Adrenal gland (tissue), 19 donors: ENCODE measurements at regions of chr5 and their contacts with region 1.

Region 1: GRCh38 chr5:173625696-173626504 is 9.4 kb upstream of the BOD1 start:
- DNase-seq: no peak
- H3K4me3 ChIP-seq: no peak overlapping the region
- H3K27ac ChIP-seq: no peak overlapping the region
- H3K4me1 ChIP-seq: peaks cover 0 to 4% of the 10 kb centered on the region in 2 donors
- H3K27me3 ChIP-seq: no peaks in the 10 kb centered on the region
- CTCF ChIP-seq: no peak
- POLR2A ChIP-seq: no peak

Region 2: DNA sequence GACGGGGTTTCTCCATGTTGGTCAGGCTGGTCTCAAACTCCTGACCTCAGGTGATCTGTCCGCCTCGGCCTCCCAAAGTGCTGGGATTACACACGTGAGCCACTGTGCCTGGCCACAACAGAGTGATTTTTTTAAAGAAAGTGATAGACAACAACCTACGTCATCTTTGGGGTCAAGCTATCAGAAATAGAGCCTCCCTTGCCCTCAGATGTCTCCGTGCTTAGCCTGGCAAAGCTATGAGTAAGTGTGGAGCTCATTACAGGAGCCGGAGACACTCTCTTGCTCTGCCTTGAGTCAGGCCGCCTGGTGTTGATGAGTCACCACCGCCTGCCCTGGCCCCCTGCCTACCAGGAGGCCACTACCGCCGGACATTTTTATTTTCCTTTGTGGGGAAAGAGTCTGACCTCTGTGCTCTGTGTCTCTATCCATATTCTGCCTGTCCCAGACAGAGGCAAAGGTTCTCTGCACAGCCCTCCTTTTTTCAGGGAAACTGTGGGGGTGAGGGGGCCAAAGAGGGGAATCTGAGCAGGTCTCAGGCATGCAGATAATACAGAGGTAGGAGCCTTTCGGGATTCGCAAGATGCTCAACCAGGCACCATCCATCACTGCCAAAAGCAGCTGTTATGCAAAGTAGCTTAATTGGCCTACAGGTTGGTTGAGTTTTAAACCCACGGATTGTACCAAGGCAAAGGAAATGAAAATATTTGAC is 138.6 kb after region 1 on chr5:
- intact Hi-C with region 1: loop called in 1 of 2 experiments (anchors 10 kb)
- DNase-seq: peak; percentile 93 to 98 (median 97)
- H3K4me3 ChIP-seq: no peak overlapping the region
- H3K27ac ChIP-seq: peak overlapping the region; percentile 61 to 96 (median 80)
- H3K4me1 ChIP-seq: peaks cover 12 to 57% of the 10 kb centered on the region in 2 donors
- H3K27me3 ChIP-seq: no peaks in the 10 kb centered on the region
- CTCF ChIP-seq: peak in 2 of 6 experiments; percentile 8 to 22
- POLR2A ChIP-seq: peak in 1 of 2 donors; percentile 70